Activated CD8-positive, alpha-beta memory T cell treated with anti-CD3 and anti-CD28 coated beads, Interleukin-2, amount 10 ng/mL, durations not matched to agents 7 days and 5 days (primary cell): ENCODE measurements at regions of chr2 and their contacts with region 1.

Region 1: GRCh38 chr2:68435615-68436014 is 31.5 kb downstream of the FBXO48 start:
- DNase-seq: no peak
- ATAC-seq: no peak
- H3K4me3 Mint-ChIP-seq: no peak overlapping the region
- H3K27ac Mint-ChIP-seq: no peak overlapping the region
- H3K4me1 Mint-ChIP-seq: peaks cover 10% of the 10 kb centered on the region
- H3K27me3 Mint-ChIP-seq: peaks cover 4% of the 10 kb centered on the region

Region 2: DNA sequence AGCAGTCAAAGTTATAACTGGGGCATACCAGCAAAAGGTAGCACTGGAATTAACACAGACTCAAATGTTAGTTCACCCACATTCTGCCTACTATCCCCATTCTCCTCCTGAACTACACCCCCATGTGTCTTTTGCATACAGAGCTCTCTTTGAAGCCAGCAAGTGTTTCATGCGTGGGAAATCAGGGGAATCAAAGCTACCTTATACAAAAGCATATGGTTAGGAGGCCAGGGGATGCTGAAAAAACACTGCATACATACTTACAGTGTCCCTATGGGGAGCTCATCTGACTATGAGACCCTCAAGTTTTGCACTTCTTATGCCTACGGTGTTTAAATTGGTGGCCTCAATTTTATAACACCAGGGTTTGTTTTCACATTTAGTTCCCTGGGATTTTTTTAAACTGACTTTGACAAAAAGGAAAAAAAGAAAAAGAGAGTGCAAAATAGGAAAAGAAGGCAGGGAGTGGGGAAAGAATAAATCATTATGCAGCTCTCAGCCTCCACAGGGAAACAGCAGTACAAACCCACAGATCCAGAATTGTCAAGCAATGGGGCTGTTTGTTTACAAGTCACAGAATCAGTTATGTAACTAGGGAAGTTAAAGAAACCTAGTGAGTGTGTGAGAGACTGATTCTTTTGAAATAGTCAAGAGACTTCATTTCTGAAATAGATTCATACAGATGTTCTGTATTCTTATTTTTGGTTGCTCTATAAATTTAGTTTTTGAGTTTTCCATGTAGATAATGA is 163.2 kb before region 1 on chr2:
- CTCF ChIA-PET with region 1: no interaction called
- DNase-seq: no peak
- ATAC-seq: no peak
- H3K4me3 Mint-ChIP-seq: no peak overlapping the region
- H3K27ac Mint-ChIP-seq: no peak overlapping the region
- H3K4me1 Mint-ChIP-seq: no peaks in the 10 kb centered on the region
- H3K27me3 Mint-ChIP-seq: peaks cover 35% of the 10 kb centered on the region

Region 3: DNA sequence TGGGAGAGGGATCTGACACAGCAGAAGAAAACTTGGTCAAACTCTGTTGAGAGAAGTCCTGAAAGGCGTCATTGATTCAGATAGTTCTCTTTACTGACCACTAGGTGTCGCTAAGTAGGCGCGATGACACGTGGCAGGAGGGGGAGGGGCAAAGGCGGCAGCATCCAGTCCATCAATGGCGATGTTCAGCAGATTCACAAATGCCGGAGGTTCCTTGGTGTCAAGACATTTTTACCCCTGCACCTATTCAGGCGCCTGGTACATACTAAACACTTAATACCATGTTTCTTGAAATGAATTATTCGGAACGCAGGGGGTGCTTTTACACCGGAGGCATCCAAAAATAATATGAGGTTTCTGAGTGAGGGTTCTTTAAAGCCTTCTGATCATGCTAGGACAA is 73.5 kb before region 1 on chr2:
- CTCF ChIA-PET with region 1: interaction called, 77 read pairs
- DNase-seq: peak; percentile 87
- ATAC-seq: peak; percentile 81
- H3K4me3 Mint-ChIP-seq: peak overlapping the region; percentile 48
- H3K27ac Mint-ChIP-seq: peak overlapping the region; percentile 79
- H3K4me1 Mint-ChIP-seq: peaks cover 38% of the 10 kb centered on the region
- H3K27me3 Mint-ChIP-seq: no peaks in the 10 kb centered on the region

Region 4: GRCh38 chr2:68516051-68516955 is 80.7 kb after region 1 on chr2:
- CTCF ChIA-PET with region 1: no interaction called
- DNase-seq: no peak
- ATAC-seq: peak; percentile 64
- H3K4me3 Mint-ChIP-seq: no peak overlapping the region
- H3K27ac Mint-ChIP-seq: no peak overlapping the region
- H3K4me1 Mint-ChIP-seq: peaks cover 17% of the 10 kb centered on the region
- H3K27me3 Mint-ChIP-seq: no peaks in the 10 kb centered on the region